Posterior vena cava (tissue), 2 donors: ENCODE measurements at regions of chr5 and their contacts with region 1.

Region 1: GRCh38 chr5:5795074-5795771 is 372.7 kb downstream of the ICE1 start:
- DNase-seq: no peak

Region 2: DNA sequence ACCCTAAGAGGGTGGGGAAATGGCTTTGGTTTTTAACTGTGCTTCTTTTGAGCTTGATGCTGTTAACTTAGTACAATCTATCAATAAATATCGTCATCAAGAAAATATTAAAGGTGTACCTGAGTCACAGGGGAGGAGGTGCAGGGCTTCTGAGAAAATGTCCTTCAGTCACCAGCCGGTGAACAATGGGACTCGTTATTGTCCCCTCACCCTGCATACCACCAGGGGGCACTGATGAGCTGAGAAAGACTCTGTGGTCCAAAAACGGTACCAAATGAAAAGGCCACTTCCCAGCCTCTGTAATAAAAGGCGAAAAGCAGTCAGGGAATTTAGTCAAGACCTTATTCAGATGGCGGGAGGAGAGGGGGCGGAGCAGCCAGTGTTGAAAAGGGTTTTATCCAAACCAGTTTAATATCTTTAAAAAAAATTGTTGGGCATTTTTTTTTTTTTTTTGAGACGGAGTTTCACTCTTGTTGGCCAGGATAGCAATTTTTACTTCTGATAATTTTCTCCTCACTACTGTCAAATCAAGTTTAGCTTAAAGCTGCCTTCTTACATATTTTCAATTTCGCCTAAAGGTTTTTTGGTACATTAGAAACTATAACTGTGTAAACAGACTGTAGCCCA is 927.0 kb before region 1 on chr5:
- intact Hi-C with region 1: no loop called
- DNase-seq: peak; percentile 77

Region 3: DNA sequence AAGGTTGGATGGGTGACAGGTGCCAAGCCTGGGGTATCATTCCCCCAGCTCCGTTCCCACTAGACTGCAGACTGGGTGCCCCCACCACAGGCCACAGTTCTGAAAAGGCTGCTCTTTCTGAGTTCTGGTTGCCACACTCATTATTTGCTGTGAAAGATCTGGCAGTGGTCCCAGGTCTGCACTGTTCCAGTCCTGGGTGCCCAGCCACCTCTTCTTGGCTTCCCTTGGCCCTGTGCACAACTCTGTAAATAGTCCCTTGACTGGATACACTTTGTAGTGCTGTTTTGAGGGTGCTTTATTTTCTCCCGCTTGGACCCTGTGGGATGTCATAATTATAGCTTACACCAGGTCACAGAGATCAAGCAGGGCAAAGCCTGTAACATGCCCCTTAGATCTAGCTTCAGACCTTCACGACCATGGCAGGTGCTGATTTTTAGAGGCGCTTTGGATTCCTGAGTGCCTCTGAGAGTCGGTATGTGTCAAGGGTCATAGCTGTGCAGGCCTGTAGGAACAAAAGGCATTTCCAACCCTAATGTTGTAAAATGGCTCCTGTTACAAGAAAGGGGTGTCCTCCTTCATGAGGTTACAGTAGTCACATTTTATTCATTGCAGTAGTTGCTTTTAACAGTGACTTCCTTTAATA is 27.8 kb before region 1 on chr5:
- intact Hi-C with region 1: loop called in 1 of 2 experiments (anchors 2 kb)
- DNase-seq: no peak